Esophagus squamous epithelium (tissue), 5 donors: ENCODE measurements at regions of chr14 and their contacts with region 1.

Region 1: DNA sequence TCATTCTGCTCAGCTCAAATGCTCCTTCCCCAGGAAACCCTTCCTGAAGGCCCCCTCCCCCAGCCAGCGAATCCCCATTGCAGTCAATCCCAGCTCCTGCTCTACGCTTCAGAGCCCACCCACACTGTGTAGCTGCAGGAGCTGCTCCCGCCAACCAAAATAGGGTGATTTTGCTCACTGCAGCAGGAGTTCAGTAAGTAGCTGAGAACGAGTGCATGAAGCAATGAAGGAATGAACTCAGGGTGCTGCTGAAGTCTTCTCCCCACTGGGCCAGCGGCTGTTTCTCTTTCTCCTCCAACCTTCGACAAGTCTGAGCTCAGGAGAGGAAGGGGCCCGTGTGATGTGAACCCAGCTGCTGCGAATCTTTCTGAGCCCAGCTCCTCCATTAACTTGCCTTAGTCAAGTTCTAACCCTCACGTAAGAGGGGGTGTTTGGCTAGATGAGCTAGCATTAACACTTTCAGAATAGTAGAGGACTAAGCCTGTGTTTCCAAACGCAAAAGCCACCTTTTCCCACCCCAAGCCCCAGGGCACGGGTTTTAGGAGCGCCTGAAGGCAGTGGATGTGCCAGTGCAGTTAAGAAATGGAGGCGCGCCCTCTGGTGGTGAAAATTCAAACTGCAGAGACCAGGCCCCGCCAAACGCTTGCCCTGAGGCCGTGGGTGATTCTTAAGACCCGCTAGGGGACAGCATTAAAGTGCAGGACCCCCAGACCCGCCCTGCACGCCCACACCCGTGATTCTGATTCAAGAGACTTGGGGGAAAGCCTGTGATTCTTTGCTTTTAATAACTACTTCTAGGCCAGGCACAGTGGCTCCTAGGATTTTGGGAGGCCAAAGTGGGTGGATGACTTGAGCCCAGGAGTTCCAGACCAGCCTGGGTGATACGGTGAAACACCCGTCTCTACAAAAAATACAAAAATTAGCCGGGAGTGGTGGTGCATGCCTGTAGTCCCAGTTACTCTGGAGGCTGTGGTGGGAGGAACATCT is 11.9 kb upstream of the SERPINA4 start:
- DNase-seq: no peak
- H3K4me3 ChIP-seq: no peak overlapping the region
- H3K27ac ChIP-seq: no peak overlapping the region
- H3K4me1 ChIP-seq: peaks cover 0 to 1% (median 0%) of the 10 kb centered on the region in 3 donors
- H3K27me3 ChIP-seq: peaks cover 0 to 32% (median 0%) of the 10 kb centered on the region in 4 donors
- CTCF ChIP-seq: peak; percentile 69 to 96 (median 84)
- POLR2A ChIP-seq: no peak

Region 2: DNA sequence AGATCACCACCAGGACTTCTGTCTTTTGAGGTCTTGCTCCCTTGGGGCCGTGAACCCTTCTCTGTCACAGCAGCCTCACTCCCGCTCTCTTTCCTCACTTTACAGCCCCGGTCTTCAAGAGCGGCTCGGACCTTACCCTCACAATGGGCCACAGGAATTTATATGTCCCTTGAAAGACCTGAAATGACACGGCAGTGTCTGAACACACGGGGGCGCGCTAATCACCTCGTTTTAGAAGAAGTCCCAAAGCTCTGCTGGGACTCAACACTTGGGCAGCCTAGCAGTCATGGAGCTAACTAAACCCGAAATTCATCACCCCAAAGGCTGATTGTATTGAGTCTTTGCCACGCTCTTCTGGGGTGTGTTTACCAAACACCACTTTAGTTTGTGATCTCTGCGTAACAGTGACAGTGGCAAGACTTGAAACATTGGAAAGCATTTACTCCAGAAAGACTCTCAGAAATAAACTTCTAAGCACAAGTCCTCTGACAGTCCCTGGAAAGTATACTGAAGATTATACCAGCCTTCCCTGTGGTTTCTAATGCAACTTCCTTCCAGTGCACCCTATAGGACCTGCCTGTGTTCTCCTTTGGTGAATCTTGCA is 125.7 kb before region 1 on chr14:
- intact Hi-C with region 1: loop called (anchors 10 kb)
- DNase-seq: no peak
- H3K4me3 ChIP-seq: no peak overlapping the region
- H3K27ac ChIP-seq: no peak overlapping the region
- H3K4me1 ChIP-seq: peaks cover 0 to 15% (median 3%) of the 10 kb centered on the region in 3 donors
- H3K27me3 ChIP-seq: peaks cover 0 to 10% (median 0%) of the 10 kb centered on the region in 4 donors
- CTCF ChIP-seq: peak in 5 of 6 experiments; percentile 45 to 69 (median 56)
- POLR2A ChIP-seq: no peak

Region 3: GRCh38 chr14:94501588-94502516 is 47.4 kb before region 1 on chr14:
- intact Hi-C with region 1: no loop called
- DNase-seq: no peak
- H3K4me3 ChIP-seq: no peak overlapping the region
- H3K27ac ChIP-seq: peak overlapping the region in 1 of 4 donors; percentile 16
- H3K4me1 ChIP-seq: peaks cover 0 to 8% (median 7%) of the 10 kb centered on the region in 3 donors
- H3K27me3 ChIP-seq: peaks cover 0 to 4% (median 0%) of the 10 kb centered on the region in 4 donors
- CTCF ChIP-seq: no peak
- POLR2A ChIP-seq: no peak